Activated CD4-positive, alpha-beta T cell treated with anti-CD3 and anti-CD28 coated beads for 36 hours (primary cell): ENCODE measurements at regions of chr7 and their contacts with region 1.

Region 1: GRCh38 chr7:130912862-130913631 is 179.0 kb upstream of the KLF14 start:
- DNase-seq: peak; percentile 92
- ATAC-seq: peak; percentile 73
- H3K4me3 Mint-ChIP-seq: peak overlapping the region; percentile 88
- H3K27ac Mint-ChIP-seq: peak overlapping the region; percentile 99
- H3K4me1 Mint-ChIP-seq: peaks cover 90% of the 10 kb centered on the region
- H3K27me3 Mint-ChIP-seq: no peaks in the 10 kb centered on the region

Region 2: DNA sequence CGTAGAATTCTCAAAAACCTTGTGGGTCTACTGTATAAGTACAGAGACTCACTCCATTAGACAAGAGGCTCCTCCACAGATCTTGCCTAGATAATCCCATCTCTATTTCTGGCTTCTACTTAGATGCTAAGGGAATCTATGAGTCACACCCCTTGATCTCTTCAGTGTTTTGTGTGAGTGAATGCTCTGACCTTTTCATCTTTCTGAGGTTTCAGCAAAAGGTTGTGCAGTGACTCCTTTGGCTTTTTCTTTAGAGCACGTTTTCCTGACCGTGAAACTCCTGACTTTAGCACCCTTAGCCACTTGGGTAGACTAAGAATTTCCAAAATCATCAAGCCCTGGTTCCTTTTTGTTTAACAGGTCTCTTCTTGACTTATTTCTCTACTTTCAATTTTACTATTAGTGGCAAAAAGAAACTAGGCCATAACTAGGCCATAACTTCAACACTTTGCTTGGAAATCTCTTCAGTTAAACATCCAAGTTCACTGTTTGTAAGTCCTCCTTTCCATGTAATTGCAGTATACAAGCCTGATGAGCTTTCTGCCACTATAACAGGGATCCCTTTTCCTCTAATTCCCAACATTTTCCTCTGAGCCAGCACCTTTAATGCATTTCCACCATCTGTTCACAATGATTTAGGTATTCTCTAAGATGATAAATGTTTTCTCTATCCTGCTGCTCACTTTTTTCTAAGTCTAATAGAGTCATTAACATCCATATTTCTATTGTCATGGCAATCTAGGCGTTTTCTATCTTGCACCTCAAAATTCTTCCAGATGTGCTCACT is 263.9 kb before region 1 on chr7:
- CTCF ChIA-PET with region 1: no interaction called
- POLR2A ChIA-PET with region 1: no interaction called
- intact Hi-C with region 1: loop called in 1 of 2 experiments (anchors 2 kb)
- DNase-seq: peak; percentile 42
- ATAC-seq: peak; percentile 95
- H3K4me3 Mint-ChIP-seq: peak overlapping the region; percentile 32
- H3K27ac Mint-ChIP-seq: peak overlapping the region; percentile 87
- H3K4me1 Mint-ChIP-seq: peaks cover 33% of the 10 kb centered on the region
- H3K27me3 Mint-ChIP-seq: no peaks in the 10 kb centered on the region

Region 3: GRCh38 chr7:130935564-130936157 is 22.6 kb after region 1 on chr7:
- CTCF ChIA-PET with region 1: interaction called, 11 read pairs
- POLR2A ChIA-PET with region 1: interaction called, 14 read pairs
- intact Hi-C with region 1: no loop called
- DNase-seq: no peak
- ATAC-seq: no peak
- H3K4me3 Mint-ChIP-seq: peak overlapping the region; percentile 2
- H3K27ac Mint-ChIP-seq: peak overlapping the region; percentile 83
- H3K4me1 Mint-ChIP-seq: peaks cover 89% of the 10 kb centered on the region
- H3K27me3 Mint-ChIP-seq: no peaks in the 10 kb centered on the region

Region 4: GRCh38 chr7:130966246-130967009 is 53.4 kb after region 1 on chr7:
- CTCF ChIA-PET with region 1: interaction called, 11 read pairs
- POLR2A ChIA-PET with region 1: interaction called, 139 read pairs
- intact Hi-C with region 1: loop called (anchors 1 kb)
- DNase-seq: peak; percentile 39
- ATAC-seq: peak; percentile 3
- H3K4me3 Mint-ChIP-seq: peak overlapping the region; percentile 11
- H3K27ac Mint-ChIP-seq: peak overlapping the region; percentile 87
- H3K4me1 Mint-ChIP-seq: peaks cover 73% of the 10 kb centered on the region
- H3K27me3 Mint-ChIP-seq: no peaks in the 10 kb centered on the region

Region 5: DNA sequence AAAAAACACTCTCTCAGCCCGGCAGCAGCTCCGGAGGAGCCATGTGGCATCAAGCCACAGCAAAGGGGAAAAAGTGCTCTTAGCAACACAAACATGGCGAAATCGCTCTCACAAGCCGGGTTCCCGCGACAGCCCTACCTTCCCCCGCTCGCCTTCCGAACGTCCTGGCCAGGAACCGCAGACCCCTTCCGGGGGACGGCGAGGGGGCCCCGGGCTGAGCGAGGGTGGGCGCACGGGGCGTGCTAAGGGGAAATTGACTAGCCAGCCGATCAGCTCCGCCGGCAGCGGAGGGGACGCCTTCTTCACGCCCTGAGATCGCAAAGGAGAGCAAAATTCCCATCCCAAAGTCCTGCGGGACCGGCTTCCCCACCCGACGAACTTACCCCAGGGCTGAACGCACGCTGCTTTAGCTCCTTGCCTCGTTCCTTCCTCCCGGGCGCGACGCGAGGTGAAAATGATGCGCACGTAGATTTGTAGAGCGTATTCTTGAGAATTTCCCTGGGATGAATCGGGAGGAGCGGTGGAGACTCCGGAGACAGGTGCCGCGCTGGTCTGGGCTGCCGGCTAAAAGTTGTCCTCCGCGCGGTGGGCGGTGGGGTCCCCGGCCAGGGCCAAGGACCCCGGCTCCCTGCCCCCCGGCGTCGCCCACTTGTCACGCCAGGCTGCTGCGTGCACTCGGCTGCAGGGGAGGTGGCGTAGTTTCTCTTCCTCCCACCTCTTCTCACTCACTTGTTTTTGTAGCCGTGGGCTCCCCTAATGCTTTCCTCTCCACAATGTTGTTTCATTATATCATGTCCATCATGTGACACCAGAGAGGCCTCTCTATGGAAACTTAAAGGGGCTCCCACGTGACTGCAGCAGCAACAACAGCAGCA is 194.5 kb after region 1 on chr7:
- CTCF ChIA-PET with region 1: interaction called, 3 read pairs
- POLR2A ChIA-PET with region 1: interaction called, 12 read pairs
- intact Hi-C with region 1: loop called (anchors 1 to 5 kb)
- DNase-seq: peak; percentile 83
- ATAC-seq: peak; percentile 47
- H3K4me3 Mint-ChIP-seq: peak overlapping the region; percentile 95
- H3K27ac Mint-ChIP-seq: peak overlapping the region; percentile 97
- H3K4me1 Mint-ChIP-seq: peaks cover 66% of the 10 kb centered on the region
- H3K27me3 Mint-ChIP-seq: no peaks in the 10 kb centered on the region

Region 6: DNA sequence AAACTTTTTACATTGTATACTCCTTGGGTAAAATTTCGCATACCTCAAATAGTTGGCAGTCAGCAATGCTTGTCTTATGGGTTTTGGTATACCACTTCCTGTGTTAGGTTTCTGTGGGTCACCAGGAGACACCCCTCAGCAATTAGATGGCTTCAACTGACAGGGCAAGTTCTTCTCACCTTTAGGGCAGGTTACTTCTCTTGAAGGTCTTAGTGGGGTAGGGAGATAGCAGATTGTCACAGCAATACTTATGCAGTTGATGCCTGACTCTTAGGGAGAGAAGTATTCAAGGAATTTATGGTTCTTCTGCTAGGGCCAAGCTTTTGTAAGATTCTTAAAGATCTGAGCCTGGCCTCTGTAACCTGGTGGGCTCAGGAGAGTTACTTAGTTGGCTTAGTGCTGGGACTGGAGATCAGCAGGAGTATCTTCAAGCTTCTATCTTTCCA is 457.5 kb after region 1 on chr7:
- CTCF ChIA-PET with region 1: interaction called, 3 read pairs
- POLR2A ChIA-PET with region 1: no interaction called
- intact Hi-C with region 1: loop called in 1 of 2 experiments (anchors 2 kb)
- DNase-seq: peak; percentile 30
- ATAC-seq: peak; percentile 64
- H3K4me3 Mint-ChIP-seq: no peak overlapping the region
- H3K27ac Mint-ChIP-seq: no peak overlapping the region
- H3K4me1 Mint-ChIP-seq: peaks cover 70% of the 10 kb centered on the region
- H3K27me3 Mint-ChIP-seq: no peaks in the 10 kb centered on the region